ENCODE measurements at regions of chr7 and their contacts with region 1.

Region 1: GRCh38 chr7:148698397-148699023 is at the start of gene CUL1:
- DNase-seq: peak; percentile 90 to 94
- ATAC-seq: peak; percentile 83 to 87 (median 84)
- H3K4me3 ChIP-seq: peak within 1 kb of the TSS; percentile 97
- H3K27ac ChIP-seq: peak within 1 kb of the TSS; percentile 99
- H3K4me1 ChIP-seq: peaks cover 35% of the 10 kb centered on the region
- H3K27me3 ChIP-seq: no peaks in the 10 kb centered on the region
- CTCF ChIP-seq: no peak
- total RNA-seq, gene CUL1: 65.1 to 97.1 (median 88.8) TPM

Region 2: DNA sequence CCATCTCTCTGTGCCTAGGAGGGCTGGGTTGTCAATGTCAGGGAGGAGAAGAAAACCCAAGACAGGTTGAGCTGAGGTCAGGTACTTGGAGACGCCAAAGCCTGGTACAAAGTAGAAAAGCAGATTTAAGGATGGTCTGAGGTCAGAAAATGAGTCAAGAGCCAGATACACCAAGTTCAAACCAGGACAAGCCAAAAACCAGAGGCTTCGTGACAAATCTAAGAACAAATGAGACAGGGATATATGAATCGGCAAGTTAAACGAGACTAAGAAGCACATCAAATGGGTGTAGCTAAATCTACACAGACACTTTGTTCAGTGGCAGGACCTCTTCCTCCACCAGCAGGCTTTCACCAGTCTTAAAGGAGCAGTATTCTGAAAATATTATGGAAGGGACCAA is 73.8 kb before region 1 on chr7:
- intact Hi-C with region 1: loop called in 1 of 2 experiments (anchors 5 kb)
- DNase-seq: no peak
- ATAC-seq: peak; percentile 49 to 68 (median 61)
- H3K4me3 ChIP-seq: peak overlapping the region; percentile 36
- H3K27ac ChIP-seq: peak overlapping the region; percentile 58
- H3K4me1 ChIP-seq: peaks cover 17% of the 10 kb centered on the region
- H3K27me3 ChIP-seq: no peaks in the 10 kb centered on the region
- CTCF ChIP-seq: no peak

Region 3: GRCh38 chr7:148684289-148684830 is 14.2 kb before region 1 on chr7:
- intact Hi-C with region 1: no loop called
- DNase-seq: no peak
- ATAC-seq: no peak
- H3K4me3 ChIP-seq: no peak overlapping the region
- H3K27ac ChIP-seq: no peak overlapping the region
- H3K4me1 ChIP-seq: no peaks in the 10 kb centered on the region
- H3K27me3 ChIP-seq: no peaks in the 10 kb centered on the region
- CTCF ChIP-seq: no peak

Region 4: DNA sequence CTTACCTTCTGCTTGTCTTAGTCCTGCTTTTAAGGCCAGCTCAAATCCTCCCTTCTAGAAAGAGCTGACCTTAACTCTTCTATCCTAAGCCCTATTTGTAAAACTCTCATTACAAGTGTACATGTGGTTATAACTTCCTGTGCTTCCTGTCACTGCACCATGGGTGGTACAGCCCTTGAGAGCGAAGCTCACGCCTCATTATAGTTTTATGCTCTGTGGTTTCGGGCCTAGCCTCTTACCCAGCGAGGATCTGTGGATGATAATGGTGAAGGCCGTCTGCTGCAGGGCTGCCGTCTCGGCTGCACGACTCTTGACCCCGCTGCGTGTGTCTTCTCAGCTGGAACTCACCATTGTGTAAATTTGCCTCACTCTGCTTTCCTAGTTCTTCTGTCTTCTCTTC is 74.8 kb after region 1 on chr7:
- intact Hi-C with region 1: loop called in 1 of 2 experiments (anchors 5 kb)
- DNase-seq: no peak
- ATAC-seq: peak in 1 of 4 donors; percentile 9
- H3K4me3 ChIP-seq: no peak overlapping the region
- H3K27ac ChIP-seq: peak overlapping the region; percentile 63
- H3K4me1 ChIP-seq: peaks cover 12% of the 10 kb centered on the region
- H3K27me3 ChIP-seq: no peaks in the 10 kb centered on the region
- CTCF ChIP-seq: no peak

Region 5: DNA sequence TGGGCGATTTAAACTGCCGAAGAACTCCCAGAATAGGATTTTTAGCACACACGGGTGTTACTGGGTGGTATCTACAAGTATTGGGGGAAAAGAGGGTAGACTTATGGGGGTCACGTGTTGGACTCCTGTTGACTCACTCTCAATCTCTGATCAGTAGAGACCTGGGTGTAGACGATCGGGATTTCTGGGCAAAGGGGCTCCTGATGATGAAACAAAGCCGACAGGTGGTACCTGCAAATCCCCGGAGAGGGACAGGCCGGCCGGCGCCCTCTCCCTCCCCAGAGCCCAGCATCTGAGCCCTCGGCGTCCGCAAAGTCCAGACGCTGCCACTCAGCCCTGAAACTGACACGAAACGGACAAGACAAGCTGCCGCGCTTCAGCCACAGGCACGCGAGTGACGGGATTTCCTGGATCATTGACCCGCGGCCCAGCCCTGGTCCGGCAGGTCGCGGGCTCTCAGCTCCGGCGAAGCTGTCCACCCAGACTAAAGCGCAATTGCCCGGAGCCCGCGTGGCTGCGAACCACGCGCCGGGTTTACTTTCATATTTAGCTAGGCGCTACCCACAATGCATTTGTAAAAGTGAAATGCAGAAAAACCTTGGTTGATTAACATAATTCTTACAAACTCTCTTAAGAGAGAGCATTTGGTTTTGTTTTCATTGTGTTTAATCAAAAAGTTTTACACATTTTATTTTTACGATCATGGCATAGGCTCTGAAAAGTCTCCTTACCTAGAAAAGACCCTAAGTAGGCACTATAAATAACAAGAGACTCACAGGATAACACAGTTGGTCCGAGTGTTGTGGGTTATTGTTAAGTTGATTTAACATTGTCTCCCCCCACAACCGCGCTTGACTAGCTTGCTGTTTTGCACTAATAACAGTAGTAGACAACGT is 242.4 kb after region 1 on chr7:
- intact Hi-C with region 1: loop called in 1 of 2 experiments (anchors 5 kb)
- DNase-seq: peak; percentile 83 to 91
- ATAC-seq: peak; percentile 92 to 94 (median 94)
- H3K4me3 ChIP-seq: peak overlapping the region; percentile 72
- H3K27ac ChIP-seq: peak overlapping the region; percentile 91
- H3K4me1 ChIP-seq: peaks cover 5% of the 10 kb centered on the region
- H3K27me3 ChIP-seq: no peaks in the 10 kb centered on the region
- CTCF ChIP-seq: no peak

Measured in psoas muscle (tissue), 8 donors.